Naive thymus-derived CD4-positive, alpha-beta T cell (primary cell): ENCODE measurements at regions of chr17 and their contacts with region 1.

Region 1: GRCh38 chr17:3602499-3602898 is 6.7 kb downstream of the TRPV1 start:
- DNase-seq: peak in 2 of 9 donors; percentile 5 to 7
- ATAC-seq: no peak
- H3K4me3 ChIP-seq: no peak overlapping the region
- H3K4me3 Mint-ChIP-seq: no peak overlapping the region
- H3K27ac ChIP-seq: no peak overlapping the region
- H3K27ac Mint-ChIP-seq: no peak overlapping the region
- H3K4me1 ChIP-seq: no peaks in the 10 kb centered on the region
- H3K4me1 Mint-ChIP-seq: peaks cover 0 to 1% (median 0%) of the 10 kb centered on the region in 7 donors
- H3K27me3 ChIP-seq: no peaks in the 10 kb centered on the region
- H3K27me3 Mint-ChIP-seq: no peaks in the 10 kb centered on the region

Region 2: GRCh38 chr17:3647769-3648555 is 45.5 kb after region 1 on chr17:
- CTCF ChIA-PET with region 1: no interaction called
- POLR2A ChIA-PET with region 1: no interaction called
- intact Hi-C with region 1: loop called in 1 of 2 experiments (anchors 1 kb)
- DNase-seq: peak in 5 of 9 donors; percentile 15 to 42 (median 23)
- ATAC-seq: peak; percentile 66
- H3K4me3 ChIP-seq: no peak overlapping the region
- H3K4me3 Mint-ChIP-seq: no peak overlapping the region
- H3K27ac ChIP-seq: no peak overlapping the region
- H3K27ac Mint-ChIP-seq: no peak overlapping the region
- H3K4me1 ChIP-seq: no peaks in the 10 kb centered on the region
- H3K4me1 Mint-ChIP-seq: peaks cover 0 to 18% (median 0%) of the 10 kb centered on the region in 7 donors
- H3K27me3 ChIP-seq: no peaks in the 10 kb centered on the region
- H3K27me3 Mint-ChIP-seq: no peaks in the 10 kb centered on the region